CD8-positive, alpha-beta memory T cell (primary cell): ENCODE measurements at regions of chr17 and their contacts with region 1.

Region 1: DNA sequence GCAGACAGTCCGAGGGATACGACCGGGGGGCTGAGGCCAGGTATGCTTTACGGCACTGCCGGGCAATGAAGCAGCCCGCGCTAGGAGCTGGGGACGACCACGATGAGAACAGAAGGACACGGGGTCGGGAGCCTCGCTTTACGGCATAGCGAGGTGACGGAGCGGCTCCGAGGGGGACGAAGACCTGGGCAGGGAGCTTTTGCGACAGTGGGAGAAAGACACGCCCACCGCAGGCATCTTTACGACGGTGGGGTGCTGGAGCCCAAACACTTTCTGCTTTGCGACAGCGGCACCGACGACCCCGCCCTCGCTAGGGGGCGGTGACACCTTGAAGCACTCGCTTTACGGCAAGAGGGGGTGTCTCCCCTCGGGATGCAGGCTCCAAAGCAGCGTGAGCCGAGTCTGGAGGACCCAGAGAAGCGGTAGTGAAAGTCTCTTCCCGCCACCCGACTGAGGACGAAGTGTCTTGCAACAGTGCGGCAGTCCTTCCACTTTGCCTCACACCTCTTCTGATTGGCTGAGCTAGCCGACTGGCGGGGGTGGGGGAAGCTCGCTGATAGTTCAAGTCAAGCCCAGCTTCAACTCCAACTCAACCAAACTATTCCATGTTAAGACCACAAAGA is 350 bp upstream of the NEURL4 start:
- DNase-seq: peak; percentile 92 to 98 (median 97)
- H3K4me3 ChIP-seq: peak overlapping the region; percentile 79
- H3K4me3 Mint-ChIP-seq: peak overlapping the region; percentile 91 to 99 (median 97)
- H3K27ac ChIP-seq: peak overlapping the region; percentile 82
- H3K27ac Mint-ChIP-seq: peak overlapping the region; percentile 95 to 99 (median 97)
- H3K4me1 ChIP-seq: peaks cover 43% of the 10 kb centered on the region
- H3K4me1 Mint-ChIP-seq: peaks cover 33 to 54% (median 42%) of the 10 kb centered on the region in 3 donors
- H3K27me3 ChIP-seq: no peaks in the 10 kb centered on the region
- H3K27me3 Mint-ChIP-seq: peaks cover 0 to 2% of the 10 kb centered on the region in 2 donors

Region 2: GRCh38 chr17:7314719-7315569 is 14.5 kb before region 1 on chr17 and contains the start of gene GPS2:
- CTCF ChIA-PET with region 1: interaction called, 6 read pairs
- POLR2A ChIA-PET with region 1: interaction called, 11 read pairs
- DNase-seq: peak; percentile 88 to 94 (median 90)
- H3K4me3 ChIP-seq: peak within 1 kb of the TSS; percentile 66
- H3K4me3 Mint-ChIP-seq: peak within 1 kb of the TSS; percentile 87 to 96 (median 92)
- H3K27ac ChIP-seq: peak within 1 kb of the TSS; percentile 76
- H3K27ac Mint-ChIP-seq: peak within 1 kb of the TSS; percentile 92 to 97 (median 94)
- H3K4me1 ChIP-seq: peaks cover 49% of the 10 kb centered on the region
- H3K4me1 Mint-ChIP-seq: peaks cover 44 to 58% (median 48%) of the 10 kb centered on the region in 3 donors
- H3K27me3 ChIP-seq: no peaks in the 10 kb centered on the region
- H3K27me3 Mint-ChIP-seq: peaks cover 0 to 8% of the 10 kb centered on the region in 2 donors
- total RNA-seq, gene GPS2: 81.1 to 85.2 TPM